ENCODE measurements at regions of chr12 and their contacts with region 1.

Region 1: DNA sequence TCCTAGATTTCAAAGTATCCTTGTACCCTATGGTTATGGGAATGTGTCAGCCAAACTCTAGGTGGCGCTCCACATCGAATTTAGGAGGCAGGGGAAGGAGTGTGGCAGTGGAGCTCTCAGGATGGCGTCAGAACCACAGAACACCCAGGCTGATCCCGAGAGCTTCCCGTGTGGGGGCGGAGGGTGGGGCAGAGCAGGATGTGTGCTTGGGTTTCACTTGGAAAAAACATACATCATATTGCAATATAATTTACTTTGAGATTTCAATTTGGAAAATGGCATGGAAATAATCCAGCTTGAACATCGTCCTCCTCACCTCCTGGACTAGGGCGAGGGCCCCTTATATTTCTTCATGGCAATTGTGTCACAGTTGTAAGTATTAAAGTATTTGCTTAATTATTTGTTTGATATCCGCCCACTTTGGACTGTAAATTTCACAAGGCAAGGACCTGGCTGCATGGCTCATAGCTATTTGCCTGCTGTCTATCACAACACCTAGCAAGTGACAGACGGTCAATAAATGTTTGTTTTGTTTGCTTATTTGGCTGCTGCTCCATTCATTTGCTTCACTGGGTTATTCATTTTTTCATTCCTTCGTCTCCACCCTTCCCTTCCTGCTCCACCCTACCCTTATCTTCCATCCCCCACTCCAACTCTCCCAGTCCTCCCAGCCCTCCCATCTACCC is 221.5 kb upstream of the HMGA2 start:
- DNase-seq: peak; percentile 78
- ATAC-seq: peak; percentile 97

Region 2: DNA sequence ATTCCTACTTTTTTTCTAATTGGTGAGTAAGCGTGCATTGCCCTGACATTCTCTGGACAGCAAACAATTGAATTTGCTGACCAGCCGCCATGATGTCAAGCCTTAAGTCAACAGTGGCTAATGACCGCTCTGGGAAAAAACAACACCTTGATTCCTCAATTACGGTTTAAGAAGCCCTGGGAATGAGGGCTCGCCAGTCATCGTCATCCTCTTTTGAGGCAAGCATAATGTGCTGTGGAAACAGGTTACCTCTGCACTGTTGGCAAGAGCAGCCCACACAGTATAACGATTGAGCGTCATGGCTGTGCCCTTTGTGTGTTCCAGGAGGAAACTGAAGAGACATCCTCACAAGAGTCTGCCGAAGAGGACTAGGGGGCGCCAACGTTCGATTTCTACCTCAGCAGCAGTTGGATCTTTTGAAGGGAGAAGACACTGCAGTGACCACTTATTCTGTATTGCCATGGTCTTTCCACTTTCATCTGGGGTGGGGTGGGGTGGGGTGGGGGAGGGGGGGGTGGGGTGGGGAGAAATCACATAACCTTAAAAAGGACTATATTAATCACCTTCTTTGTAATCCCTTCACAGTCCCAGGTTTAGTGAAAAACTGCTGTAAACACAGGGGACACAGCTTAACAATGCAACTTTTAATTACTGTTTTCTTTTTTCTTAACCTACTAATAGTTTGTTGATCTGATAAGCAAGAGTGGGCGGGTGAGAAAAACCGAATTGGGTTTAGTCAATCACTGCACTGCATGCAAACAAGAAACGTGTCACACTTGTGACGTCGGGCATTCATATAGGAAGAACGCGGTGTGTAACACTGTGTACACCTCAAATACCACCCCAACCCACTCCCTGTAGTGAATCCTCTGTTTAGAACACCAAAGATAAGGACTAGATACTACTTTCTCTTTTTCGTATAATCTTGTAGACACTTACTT is 360.4 kb after region 1 on chr12:
- intact Hi-C with region 1: no loop called
- DNase-seq: peak; percentile 63
- ATAC-seq: no peak

Region 3: GRCh38 chr12:65986047-65986446 is 383.3 kb after region 1 on chr12:
- intact Hi-C with region 1: loop called (anchors 10 kb)
- DNase-seq: no peak
- ATAC-seq: no peak

Region 4: DNA sequence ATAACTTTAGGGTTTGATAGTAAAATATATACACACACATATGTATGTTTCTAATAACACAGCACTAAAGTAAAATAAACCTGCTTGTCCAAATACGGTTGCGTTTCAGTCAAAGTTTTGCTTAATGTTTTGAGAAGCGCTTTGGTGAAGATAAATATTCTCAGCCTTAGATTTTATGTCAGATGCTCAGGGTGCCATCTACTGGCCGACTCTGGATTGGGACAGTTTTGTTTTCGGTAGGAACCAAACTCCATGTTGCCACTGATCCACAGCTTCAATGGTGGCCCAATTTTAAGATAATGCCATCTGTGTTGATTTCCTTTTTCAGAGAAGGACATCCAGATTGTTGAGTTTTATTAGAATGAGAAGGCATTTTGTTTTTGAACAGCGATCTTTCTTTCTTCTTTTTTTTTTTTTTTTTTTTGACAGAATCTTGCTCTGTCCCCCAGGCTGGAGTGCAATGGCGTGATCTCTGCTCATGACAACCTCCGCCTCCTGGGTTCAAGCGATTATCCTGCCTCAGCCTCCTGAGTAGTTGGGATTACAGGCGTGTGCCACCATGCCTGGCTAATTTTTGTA is 484.7 kb after region 1 on chr12:
- intact Hi-C with region 1: loop called (anchors 5 kb)
- DNase-seq: no peak
- ATAC-seq: peak; percentile 59